GM10248 (cell line): ENCODE measurements at regions of chr12 and their contacts with region 1.

Region 1: GRCh38 chr12:132986001-132986912 is at the start of gene ZNF26:
- DNase-seq: peak; percentile 96
- CTCF ChIP-seq: no peak

Region 2: GRCh38 chr12:132700212-132700822 is 285.9 kb before region 1 on chr12:
- CTCF ChIA-PET with region 1: no interaction called
- POLR2A ChIA-PET with region 1: no interaction called
- DNase-seq: no peak
- CTCF ChIP-seq: no peak

Region 3: DNA sequence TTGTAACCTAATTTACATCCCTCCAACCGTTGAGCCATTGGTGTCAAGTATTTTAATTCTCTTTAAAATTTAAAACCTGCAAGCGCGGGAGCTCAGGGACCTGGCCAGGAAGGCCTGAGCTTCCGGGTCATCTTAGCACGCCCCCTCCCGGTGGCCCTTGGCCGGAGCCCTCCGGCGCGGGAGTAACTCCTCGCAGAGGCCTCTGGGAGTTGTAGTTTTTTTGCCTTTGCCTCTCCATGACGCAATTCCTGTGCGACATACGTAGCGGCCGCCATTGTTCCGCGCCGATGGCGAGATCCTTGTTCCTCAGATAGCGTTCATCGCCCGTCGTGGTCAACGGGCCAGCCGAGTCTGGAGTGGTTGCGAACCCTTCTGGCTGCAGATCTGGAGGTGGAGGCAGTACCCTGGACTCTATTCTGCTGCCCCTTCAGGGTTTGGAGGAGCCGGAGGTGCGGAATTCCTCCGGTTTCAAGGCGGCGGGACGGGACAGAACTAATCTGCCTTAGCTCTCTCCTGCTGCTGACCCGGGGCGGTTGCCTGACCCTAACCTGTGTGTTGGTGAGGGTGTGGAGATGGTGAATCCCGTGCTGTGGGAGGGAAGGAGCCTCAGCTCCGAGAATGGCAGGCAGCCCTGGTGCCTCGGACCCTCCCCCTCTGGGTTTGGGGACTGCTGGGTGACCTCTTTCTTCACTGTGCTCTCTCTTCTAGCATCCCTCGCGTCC is 195.1 kb after region 1 on chr12 and contains the start of gene ZNF268:
- CTCF ChIA-PET with region 1: interaction called, 11 read pairs
- POLR2A ChIA-PET with region 1: no interaction called
- DNase-seq: peak; percentile 97
- CTCF ChIP-seq: peak; percentile 88